Esophagus squamous epithelium (tissue), 5 donors: ENCODE measurements at regions of chr1 and their contacts with region 1.

Region 1: DNA sequence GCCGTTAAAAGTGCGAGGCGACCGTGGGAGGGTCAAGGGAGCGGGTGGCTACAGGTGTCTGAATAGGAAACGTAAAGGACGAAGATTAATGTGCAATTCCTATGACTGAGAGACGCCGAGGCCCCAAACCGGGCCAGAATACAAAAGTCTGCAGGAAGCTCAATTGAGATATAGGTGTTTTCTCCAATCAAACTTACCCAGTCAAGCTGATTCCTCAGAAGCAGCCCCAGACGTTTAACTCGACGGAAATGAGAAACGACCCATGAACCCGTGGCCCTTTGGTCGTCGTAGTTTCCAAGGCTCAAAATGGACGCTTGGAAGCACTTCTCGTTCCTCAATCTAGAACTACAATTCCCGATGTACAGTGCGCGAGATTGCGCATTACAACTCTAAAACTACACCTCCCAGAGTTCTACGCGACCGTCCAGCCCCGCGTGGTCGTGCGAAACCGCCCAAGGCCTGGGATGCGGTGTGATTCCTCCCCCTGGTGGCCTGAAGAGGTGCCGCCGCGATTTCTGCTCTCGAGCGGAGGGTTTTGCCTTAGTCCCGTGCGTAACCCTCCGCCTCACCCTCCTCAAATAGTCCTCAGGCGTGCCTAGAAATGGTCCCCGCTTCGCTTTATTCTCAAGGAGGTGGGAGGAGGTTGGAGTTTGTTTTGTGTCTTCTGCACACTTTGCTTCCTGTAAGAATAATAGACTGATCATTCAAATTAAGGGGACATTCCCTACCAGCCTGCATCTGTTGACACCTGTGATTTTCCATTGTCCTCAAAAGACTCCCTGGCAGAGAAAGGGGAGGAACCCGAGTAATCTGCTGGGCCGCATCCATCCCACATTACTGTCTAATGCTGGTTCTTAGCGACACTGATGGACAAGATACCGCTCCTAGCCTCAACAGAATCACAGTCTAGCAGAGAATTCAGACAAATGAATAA is at the start of gene PAFAH2:
- DNase-seq: peak; percentile 88
- H3K4me3 ChIP-seq: peak within 1 kb of the TSS; percentile 43 to 80 (median 68)
- H3K27ac ChIP-seq: peak within 1 kb of the TSS; percentile 81 to 94 (median 90)
- H3K4me1 ChIP-seq: peaks cover 11 to 23% (median 15%) of the 10 kb centered on the region in 3 donors
- H3K27me3 ChIP-seq: no peaks in the 10 kb centered on the region
- CTCF ChIP-seq: peak; percentile 96 to 100 (median 100)
- POLR2A ChIP-seq: peak in 3 of 4 donors; percentile 22 to 55 (median 49)
- total RNA-seq, gene PAFAH2: 8.3 to 17.2 (median 11.7) TPM

Region 2: GRCh38 chr1:25819576-25820246 is 178.4 kb before region 1 on chr1 and contains the start of gene MTFR1L:
- intact Hi-C with region 1: loop called (anchors 10 kb)
- DNase-seq: peak; percentile 46
- H3K4me3 ChIP-seq: peak within 1 kb of the TSS; percentile 65 to 100 (median 90)
- H3K27ac ChIP-seq: peak within 1 kb of the TSS; percentile 95 to 97 (median 96)
- H3K4me1 ChIP-seq: peaks cover 22 to 70% (median 29%) of the 10 kb centered on the region in 3 donors
- H3K27me3 ChIP-seq: no peaks in the 10 kb centered on the region
- CTCF ChIP-seq: peak in 1 of 6 experiments; percentile 28
- POLR2A ChIP-seq: peak in 3 of 4 donors; percentile 82 to 98 (median 90)
- total RNA-seq, gene MTFR1L: 24.4 to 53.8 (median 28.3) TPM

Region 3: GRCh38 chr1:25895365-25895993 is 102.6 kb before region 1 on chr1:
- intact Hi-C with region 1: loop called (anchors 1 kb)
- DNase-seq: peak; percentile 55
- H3K4me3 ChIP-seq: no peak overlapping the region
- H3K27ac ChIP-seq: peak overlapping the region in 1 of 4 donors; percentile 43
- H3K4me1 ChIP-seq: peaks cover 20 to 64% (median 29%) of the 10 kb centered on the region in 3 donors
- H3K27me3 ChIP-seq: no peaks in the 10 kb centered on the region
- CTCF ChIP-seq: peak; percentile 93 to 99 (median 99)
- POLR2A ChIP-seq: no peak

Region 4: DNA sequence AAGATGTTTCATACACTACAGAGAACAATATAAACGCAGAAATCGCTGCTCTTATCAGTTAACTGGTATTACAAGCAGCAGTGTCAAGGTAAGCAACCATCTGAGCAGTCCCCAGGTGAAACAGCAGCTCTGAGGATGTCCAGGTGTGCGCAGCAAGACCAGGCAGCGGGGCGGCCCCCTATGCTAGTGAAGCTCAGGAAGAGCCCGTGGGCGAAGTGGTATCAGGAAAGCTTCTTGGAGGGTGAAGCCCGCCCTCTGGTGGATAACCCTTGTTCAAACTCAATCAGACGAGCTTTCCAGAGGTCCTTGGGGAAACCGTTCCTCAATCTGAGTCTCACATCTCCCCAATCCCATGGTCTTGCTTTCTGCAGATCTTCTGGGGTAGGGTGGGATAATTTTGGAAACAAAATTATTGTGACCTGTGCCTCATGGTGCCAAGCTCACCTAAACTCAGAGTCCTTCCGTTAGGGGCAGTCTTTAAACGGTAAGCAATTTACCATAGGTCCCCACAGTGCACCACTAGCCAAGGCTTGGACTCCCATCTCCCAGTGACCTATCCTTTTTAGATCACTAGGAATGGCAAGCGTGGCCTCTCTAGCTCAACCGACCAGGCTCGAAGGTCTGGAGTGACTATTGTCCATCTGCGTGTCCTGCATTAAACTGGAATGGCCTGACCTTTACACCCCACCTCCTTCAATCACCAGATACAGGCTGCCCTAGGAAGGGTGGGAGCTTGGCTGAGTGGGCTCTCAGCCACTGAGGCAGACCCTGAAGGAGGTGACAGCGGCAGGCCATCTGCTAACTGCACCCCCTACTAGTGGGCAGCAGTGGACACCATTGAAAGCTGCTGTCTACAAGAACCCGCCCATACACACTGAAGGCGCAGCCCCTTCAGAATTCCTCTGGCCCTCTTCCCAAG is 147.2 kb after region 1 on chr1:
- intact Hi-C with region 1: no loop called
- DNase-seq: no peak
- H3K4me3 ChIP-seq: no peak overlapping the region
- H3K27ac ChIP-seq: no peak overlapping the region
- H3K4me1 ChIP-seq: peaks cover 0 to 14% (median 6%) of the 10 kb centered on the region in 3 donors
- H3K27me3 ChIP-seq: peaks cover 0 to 12% (median 0%) of the 10 kb centered on the region in 4 donors
- CTCF ChIP-seq: peak; percentile 73 to 90 (median 83)
- POLR2A ChIP-seq: no peak